ENCODE measurements at regions of chr4 and their contacts with region 1.

Region 1: DNA sequence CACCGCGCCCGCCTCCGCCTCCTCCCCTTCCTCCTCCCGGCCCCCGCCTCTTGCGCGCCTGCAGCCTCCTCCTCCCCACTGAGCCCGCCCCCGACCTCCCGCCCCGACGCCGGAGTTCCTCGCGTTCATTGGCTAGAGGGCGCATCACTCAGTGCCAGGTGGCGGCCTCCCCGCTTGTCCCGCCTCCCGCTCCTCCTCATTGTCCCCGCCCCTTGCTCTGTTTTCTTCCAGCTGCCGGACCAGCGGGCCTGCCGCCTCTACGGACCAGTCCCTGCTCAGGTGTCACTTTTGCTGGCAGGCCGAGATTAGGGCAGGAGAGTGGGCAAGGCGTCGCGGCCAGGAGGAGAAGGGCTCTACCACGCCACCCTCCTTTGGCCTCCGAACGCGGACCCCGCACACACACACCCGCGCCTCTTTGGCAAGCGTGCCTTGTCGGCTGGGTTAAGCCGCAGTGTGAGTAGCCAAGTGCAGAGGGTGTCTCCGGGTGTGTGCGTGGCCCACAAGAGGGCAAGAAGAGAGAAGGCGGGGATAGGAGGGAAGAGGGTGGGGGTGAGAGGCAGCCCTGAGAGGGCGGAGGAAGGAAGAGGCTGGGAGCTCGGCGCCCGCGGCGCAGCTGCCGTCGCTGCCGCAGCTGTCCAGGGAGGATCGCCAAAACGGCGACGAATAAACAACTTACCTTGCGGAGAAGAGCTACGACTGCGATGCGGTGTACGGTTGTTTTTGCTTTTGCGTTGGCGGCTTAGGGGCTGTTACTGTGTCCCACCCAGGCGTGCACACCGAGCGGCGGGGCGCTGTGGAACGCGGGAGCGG is 436 bp upstream of the PPP3CA start:
- DNase-seq: peak; percentile 98
- ATAC-seq: peak; percentile 82
- H3K4me3 Mint-ChIP-seq: peak overlapping the region; percentile 94
- H3K27ac Mint-ChIP-seq: peak overlapping the region; percentile 95
- H3K4me1 Mint-ChIP-seq: peaks cover 39% of the 10 kb centered on the region
- H3K27me3 Mint-ChIP-seq: no peaks in the 10 kb centered on the region
- CTCF ChIP-seq: no peak

Region 2: DNA sequence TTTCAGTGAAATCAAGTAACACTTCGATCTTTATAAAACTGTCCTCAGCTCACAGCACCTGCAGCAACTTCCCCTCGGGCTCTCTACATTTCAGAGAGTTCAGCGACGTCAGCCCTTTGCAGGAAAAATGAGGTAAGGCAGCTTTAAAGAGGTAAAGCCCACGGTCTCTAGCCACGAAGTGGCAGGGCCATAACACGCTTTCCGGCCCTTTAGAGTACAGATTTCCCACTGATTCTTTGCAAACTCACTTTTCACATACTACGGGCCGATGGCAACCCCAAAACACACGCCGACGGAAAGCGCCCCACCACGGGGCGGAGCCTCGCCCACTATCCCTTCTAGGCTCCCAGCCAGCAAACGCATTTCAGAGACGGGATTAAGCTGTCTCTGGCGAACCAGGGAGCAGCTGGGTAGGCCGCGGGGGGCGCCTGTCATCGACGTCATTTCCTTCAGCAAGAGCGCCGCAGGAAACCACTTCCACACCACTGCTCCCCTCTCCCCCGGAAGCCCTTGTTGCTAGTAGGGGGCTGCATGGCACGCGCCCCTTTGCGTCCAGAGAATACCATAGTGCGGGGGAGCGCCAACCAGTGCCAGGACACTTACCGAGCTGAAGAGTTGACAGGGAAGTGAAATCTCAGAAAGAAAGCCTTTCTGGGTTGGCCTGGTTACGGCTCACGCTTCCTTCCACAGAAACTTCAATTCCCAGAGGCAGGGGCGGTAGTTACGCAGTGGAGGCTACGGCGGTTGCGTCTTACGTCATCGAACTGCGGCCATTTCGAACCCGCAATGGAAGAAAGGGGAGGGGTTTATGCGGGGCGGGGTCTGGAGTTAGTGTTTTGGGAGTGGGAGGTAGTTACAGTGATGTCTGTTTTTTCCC is 1784.2 kb before region 1 on chr4 and contains the start of gene TRMT10A:
- CTCF ChIA-PET with region 1: no interaction called
- POLR2A ChIA-PET with region 1: no interaction called
- intact Hi-C with region 1: loop called (anchors 5 kb)
- DNase-seq: peak; percentile 88
- ATAC-seq: peak; percentile 85
- H3K4me3 Mint-ChIP-seq: peak within 1 kb of the TSS; percentile 99
- H3K27ac Mint-ChIP-seq: peak within 1 kb of the TSS; percentile 100
- H3K4me1 Mint-ChIP-seq: peaks cover 18% of the 10 kb centered on the region
- H3K27me3 Mint-ChIP-seq: peaks cover 12% of the 10 kb centered on the region
- CTCF ChIP-seq: no peak
- total RNA-seq, gene TRMT10A: 4.9 and 10.2 TPM in 2 replicates

Region 3: GRCh38 chr4:101169044-101170014 is 178.4 kb before region 1 on chr4:
- CTCF ChIA-PET with region 1: interaction called, 6 read pairs
- POLR2A ChIA-PET with region 1: interaction called, 12 read pairs
- intact Hi-C with region 1: loop called (anchors 1 kb)
- DNase-seq: no peak
- ATAC-seq: peak; percentile 99
- H3K4me3 Mint-ChIP-seq: no peak overlapping the region
- H3K27ac Mint-ChIP-seq: no peak overlapping the region
- H3K4me1 Mint-ChIP-seq: peaks cover 21% of the 10 kb centered on the region
- H3K27me3 Mint-ChIP-seq: no peaks in the 10 kb centered on the region
- CTCF ChIP-seq: no peak

Region 4: DNA sequence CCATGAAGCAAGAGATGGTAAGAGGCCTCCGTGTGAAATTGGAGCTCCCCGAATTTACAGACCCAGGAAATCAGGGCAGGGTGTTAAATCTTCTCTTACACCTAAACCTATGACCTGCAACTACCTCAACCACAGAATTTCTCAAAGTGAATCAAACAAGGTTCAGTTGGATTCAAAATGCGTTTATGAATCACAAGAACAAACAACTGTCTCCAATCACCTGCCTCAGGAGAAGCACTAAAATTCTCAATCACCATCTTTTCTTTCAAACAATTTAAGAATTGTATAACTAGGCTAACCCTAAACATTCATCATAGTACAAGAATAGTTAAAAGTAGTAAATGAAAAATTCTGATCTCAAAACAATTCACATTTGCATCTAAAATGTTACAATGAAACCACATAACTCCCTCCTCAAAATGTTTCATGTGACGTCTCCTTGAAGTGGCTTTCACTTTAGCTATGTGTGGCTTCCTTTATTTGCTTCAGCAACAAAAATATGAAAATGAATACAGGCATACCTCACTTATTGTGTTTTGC is 19.6 kb before region 1 on chr4:
- CTCF ChIA-PET with region 1: no interaction called
- POLR2A ChIA-PET with region 1: interaction called, 25 read pairs
- intact Hi-C with region 1: loop called (anchors 2 kb)
- DNase-seq: no peak
- ATAC-seq: peak; percentile 63
- H3K4me3 Mint-ChIP-seq: peak overlapping the region; percentile 73
- H3K27ac Mint-ChIP-seq: peak overlapping the region; percentile 88
- H3K4me1 Mint-ChIP-seq: peaks cover 95% of the 10 kb centered on the region
- H3K27me3 Mint-ChIP-seq: no peaks in the 10 kb centered on the region
- CTCF ChIP-seq: no peak

Region 5: GRCh38 chr4:101695176-101695575 is 347.4 kb after region 1 on chr4:
- CTCF ChIA-PET with region 1: no interaction called
- POLR2A ChIA-PET with region 1: interaction called, 4 read pairs
- intact Hi-C with region 1: loop called (anchors 2 kb)
- DNase-seq: no peak
- ATAC-seq: no peak
- H3K4me3 Mint-ChIP-seq: no peak overlapping the region
- H3K27ac Mint-ChIP-seq: peak overlapping the region; percentile 51
- H3K4me1 Mint-ChIP-seq: peaks cover 82% of the 10 kb centered on the region
- H3K27me3 Mint-ChIP-seq: no peaks in the 10 kb centered on the region
- CTCF ChIP-seq: no peak

Region 6: GRCh38 chr4:101871962-101872690 is 524.4 kb after region 1 on chr4:
- CTCF ChIA-PET with region 1: no interaction called
- POLR2A ChIA-PET with region 1: interaction called, 3 read pairs
- intact Hi-C with region 1: loop called (anchors 5 kb)
- DNase-seq: no peak
- ATAC-seq: peak; percentile 52
- H3K4me3 Mint-ChIP-seq: peak overlapping the region; percentile 25
- H3K27ac Mint-ChIP-seq: peak overlapping the region; percentile 90
- H3K4me1 Mint-ChIP-seq: peaks cover 79% of the 10 kb centered on the region
- H3K27me3 Mint-ChIP-seq: no peaks in the 10 kb centered on the region
- CTCF ChIP-seq: no peak

Region 7: DNA sequence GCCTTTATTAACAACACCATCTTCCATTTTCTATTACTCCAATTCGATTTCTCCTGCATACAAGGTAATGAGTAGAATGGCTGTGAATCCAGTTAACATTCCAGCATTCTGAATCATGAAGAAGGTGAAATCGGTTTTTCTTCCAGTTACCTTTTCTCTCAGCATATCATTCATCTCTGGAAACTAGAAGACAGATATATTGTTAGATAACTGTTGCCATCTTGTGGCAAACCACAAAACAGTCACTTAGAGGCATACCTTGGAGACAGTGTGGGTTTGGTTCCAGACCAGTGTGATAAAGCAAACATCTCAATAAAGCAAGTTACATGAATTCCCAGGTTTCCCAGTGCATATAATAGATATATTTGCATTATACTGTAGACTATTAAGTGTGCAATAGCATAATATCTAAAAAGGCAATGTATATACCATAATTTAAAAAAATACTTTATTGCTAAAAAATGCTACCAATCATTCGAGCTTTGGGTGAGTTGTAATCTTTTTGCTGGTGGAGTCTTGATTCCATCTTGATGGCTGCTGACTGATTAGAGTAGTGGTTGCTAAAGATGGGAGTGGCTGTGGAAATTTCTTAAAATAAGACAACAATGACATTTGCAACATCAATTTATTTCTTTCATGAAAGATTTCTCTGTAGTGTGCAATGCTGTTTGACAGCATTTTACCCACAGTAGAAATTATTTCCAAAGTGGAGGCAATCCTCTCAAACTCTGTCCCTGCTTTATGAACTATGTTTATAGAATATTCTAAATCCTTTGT is 915.4 kb after region 1 on chr4:
- CTCF ChIA-PET with region 1: no interaction called
- POLR2A ChIA-PET with region 1: no interaction called
- intact Hi-C with region 1: no loop called
- DNase-seq: no peak
- ATAC-seq: peak; percentile 79
- H3K4me3 Mint-ChIP-seq: no peak overlapping the region
- H3K27ac Mint-ChIP-seq: no peak overlapping the region
- H3K4me1 Mint-ChIP-seq: peaks cover 2% of the 10 kb centered on the region
- H3K27me3 Mint-ChIP-seq: no peaks in the 10 kb centered on the region
- CTCF ChIP-seq: peak; percentile 25

Region 8: GRCh38 chr4:103075901-103076739 is 1728.4 kb after region 1 on chr4:
- CTCF ChIA-PET with region 1: no interaction called
- POLR2A ChIA-PET with region 1: no interaction called
- intact Hi-C with region 1: loop called (anchors 5 kb)
- DNase-seq: peak; percentile 69
- ATAC-seq: peak; percentile 64
- H3K4me3 Mint-ChIP-seq: peak overlapping the region; percentile 96
- H3K27ac Mint-ChIP-seq: peak overlapping the region; percentile 99
- H3K4me1 Mint-ChIP-seq: peaks cover 45% of the 10 kb centered on the region
- H3K27me3 Mint-ChIP-seq: no peaks in the 10 kb centered on the region
- CTCF ChIP-seq: no peak